Activated CD4-positive, alpha-beta memory T cell treated with anti-CD3 and anti-CD28 coated beads, Interleukin-2, amount 10 ng/mL, durations not matched to agents 7 days and 5 days (primary cell): ENCODE measurements at regions of chr6 and their contacts with region 1.

Region 1: DNA sequence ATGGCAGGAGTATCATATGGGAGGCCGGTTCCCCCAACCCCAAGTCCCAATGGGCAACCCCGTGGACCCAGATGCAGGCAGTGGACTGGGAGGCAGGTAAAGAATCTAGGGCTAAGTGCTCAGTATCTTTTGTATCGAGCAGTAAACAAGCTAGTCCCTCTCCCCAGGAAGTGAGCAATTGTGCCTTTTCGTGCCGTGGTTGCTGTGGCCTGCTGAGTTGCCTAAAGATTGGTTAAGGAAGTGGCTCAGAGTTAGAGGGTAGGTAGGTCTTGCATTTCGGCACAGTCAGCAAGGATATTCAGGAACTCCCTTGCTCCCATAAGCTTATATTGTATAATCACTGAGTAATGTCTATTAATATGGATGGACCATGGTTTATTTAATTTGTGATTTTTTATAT is 1.3 kb upstream of the DNAH8 start:
- DNase-seq: peak; percentile 88
- H3K4me3 Mint-ChIP-seq: peak overlapping the region; percentile 2
- H3K27ac Mint-ChIP-seq: peak overlapping the region; percentile 91
- H3K4me1 Mint-ChIP-seq: peaks cover 40% of the 10 kb centered on the region
- H3K27me3 Mint-ChIP-seq: peaks cover 24% of the 10 kb centered on the region

Region 2: GRCh38 chr6:38603966-38604365 is 109.8 kb before region 1 on chr6:
- CTCF ChIA-PET with region 1: no interaction called
- POLR2A ChIA-PET with region 1: no interaction called
- DNase-seq: no peak
- H3K4me3 Mint-ChIP-seq: no peak overlapping the region
- H3K27ac Mint-ChIP-seq: no peak overlapping the region
- H3K4me1 Mint-ChIP-seq: no peaks in the 10 kb centered on the region
- H3K27me3 Mint-ChIP-seq: no peaks in the 10 kb centered on the region

Region 3: GRCh38 chr6:38617856-38618255 is 96.0 kb before region 1 on chr6:
- CTCF ChIA-PET with region 1: no interaction called
- POLR2A ChIA-PET with region 1: no interaction called
- DNase-seq: no peak
- H3K4me3 Mint-ChIP-seq: no peak overlapping the region
- H3K27ac Mint-ChIP-seq: no peak overlapping the region
- H3K4me1 Mint-ChIP-seq: no peaks in the 10 kb centered on the region
- H3K27me3 Mint-ChIP-seq: no peaks in the 10 kb centered on the region

Region 4: DNA sequence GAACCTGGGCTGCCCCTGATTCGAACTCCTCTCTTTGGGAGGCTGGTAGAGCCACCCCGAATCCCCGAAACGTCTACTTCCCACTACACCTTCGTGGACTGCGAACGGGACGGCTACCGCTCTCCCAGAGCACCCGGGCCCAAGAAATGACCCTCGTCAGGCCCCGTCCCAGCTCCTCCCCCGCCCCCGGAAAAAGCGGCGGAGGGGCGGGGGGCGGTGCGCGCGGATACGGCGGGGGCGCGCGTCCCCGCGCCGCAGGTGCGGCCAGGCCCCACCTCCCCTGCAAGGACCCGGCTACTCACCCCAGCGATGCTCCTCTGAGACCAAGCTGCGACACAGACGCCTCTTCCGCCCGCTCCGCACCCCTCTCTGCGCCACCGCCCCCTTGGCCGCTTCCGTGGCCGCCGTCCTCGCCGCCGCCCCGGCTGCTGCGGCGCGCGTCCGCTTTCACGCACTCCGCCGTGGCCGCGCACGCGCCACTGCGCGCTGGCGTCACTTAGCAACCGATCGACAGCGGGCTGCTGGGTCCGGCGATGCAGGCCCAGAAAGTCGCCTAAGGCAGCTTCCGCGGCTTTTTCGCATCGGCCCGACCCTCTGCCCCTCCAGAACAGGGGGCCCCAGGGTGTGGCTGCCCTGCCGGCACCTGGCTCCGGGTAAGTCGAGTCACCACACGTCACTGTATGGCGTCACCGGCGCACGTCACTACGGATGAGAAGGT is 74.2 kb before region 1 on chr6 and contains the start of gene BTBD9:
- CTCF ChIA-PET with region 1: no interaction called
- POLR2A ChIA-PET with region 1: interaction called, 14 read pairs
- DNase-seq: peak; percentile 86
- H3K4me3 Mint-ChIP-seq: peak within 1 kb of the TSS; percentile 88
- H3K27ac Mint-ChIP-seq: peak within 1 kb of the TSS; percentile 87
- H3K4me1 Mint-ChIP-seq: peaks cover 45% of the 10 kb centered on the region
- H3K27me3 Mint-ChIP-seq: no peaks in the 10 kb centered on the region
- total RNA-seq, gene BTBD9: 14.7 to 16.1 TPM

Region 5: GRCh38 chr6:38702558-38703397 is 11.0 kb before region 1 on chr6 and contains the start of gene GLO1:
- CTCF ChIA-PET with region 1: interaction called, 19 read pairs
- POLR2A ChIA-PET with region 1: interaction called, 80 read pairs
- DNase-seq: peak; percentile 97
- H3K4me3 Mint-ChIP-seq: peak within 1 kb of the TSS; percentile 88
- H3K27ac Mint-ChIP-seq: peak within 1 kb of the TSS; percentile 81
- H3K4me1 Mint-ChIP-seq: peaks cover 53% of the 10 kb centered on the region
- H3K27me3 Mint-ChIP-seq: peaks cover 5% of the 10 kb centered on the region
- total RNA-seq, gene GLO1: 105 to 110 TPM

Region 6: GRCh38 chr6:38725414-38726183 is 11.8 kb after region 1 on chr6:
- CTCF ChIA-PET with region 1: interaction called, 8 read pairs
- POLR2A ChIA-PET with region 1: interaction called, 18 read pairs
- DNase-seq: no peak
- H3K4me3 Mint-ChIP-seq: no peak overlapping the region
- H3K27ac Mint-ChIP-seq: peak overlapping the region; percentile 58
- H3K4me1 Mint-ChIP-seq: peaks cover 24% of the 10 kb centered on the region
- H3K27me3 Mint-ChIP-seq: peaks cover 4% of the 10 kb centered on the region